GM13976 (cell line): ENCODE measurements at regions of chr11 and their contacts with region 1.

Region 1: DNA sequence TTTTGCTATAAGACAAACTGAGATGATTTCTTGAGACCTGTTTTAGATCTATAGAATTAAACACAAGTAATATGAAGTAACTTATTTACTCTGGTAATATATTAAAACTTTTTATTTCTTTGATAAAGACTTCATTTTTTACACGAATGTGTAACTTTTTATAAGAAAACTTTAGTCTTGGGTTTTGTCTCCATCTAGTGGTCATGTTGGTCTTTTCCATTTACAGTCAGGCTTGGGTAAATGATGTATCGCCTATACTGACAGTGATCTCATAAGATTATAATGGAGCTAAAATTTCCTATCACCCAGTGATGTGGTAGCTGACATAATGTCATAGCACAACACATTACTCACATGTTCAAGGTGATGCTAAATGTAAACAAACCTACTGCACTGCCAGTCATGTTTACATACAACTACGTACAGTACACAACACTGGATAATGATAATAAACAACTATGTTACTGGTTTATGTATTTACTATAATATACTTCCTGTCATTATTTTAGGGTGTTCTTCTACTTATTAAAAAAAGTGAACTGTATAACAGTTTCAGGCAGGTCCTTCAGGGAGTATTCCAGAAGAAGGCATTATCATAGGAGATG is 7.5 kb upstream of the C11orf97 start:
- DNase-seq: peak; percentile 50
- CTCF ChIP-seq: peak; percentile 35

Region 2: DNA sequence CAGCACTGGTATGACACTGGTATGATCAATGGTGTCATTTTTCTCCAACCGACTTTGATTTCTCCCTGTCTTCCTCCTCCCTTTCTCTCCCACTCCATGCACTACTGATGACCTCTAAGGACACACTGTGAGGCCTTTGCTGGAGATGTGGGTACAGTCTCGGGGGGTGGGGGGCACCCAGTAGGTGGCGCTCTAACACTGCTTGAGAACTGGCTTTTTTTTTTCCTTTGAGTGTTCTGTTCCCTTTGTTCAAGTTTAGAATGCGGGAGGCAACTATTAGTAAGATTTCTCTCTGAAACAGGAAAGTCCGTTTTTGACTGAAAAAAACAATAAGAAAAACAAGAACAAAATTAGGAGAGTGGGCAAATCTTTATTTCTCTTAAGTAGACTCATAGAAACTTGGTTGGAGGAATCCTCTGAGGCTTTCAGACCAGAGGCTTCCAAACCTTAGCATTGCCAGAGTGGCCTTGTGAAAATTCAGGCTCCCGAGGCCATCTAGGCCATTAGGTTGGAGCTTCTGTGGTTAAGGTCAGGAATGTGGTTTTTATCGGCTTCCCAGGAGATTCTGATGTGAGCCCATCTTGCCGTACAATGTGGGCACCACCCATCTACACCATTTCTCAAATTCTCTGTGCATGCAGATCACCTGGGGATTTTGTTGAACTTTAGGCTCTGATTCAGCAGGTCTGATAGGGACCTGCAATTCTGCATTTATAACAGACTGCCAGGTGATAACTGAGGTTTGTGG is 332.9 kb before region 1 on chr11:
- in situ Hi-C with region 1: loop called (anchors 10 kb)
- DNase-seq: peak; percentile 53
- CTCF ChIP-seq: peak; percentile 67

Region 3: GRCh38 chr11:94325681-94326080 is 179.1 kb before region 1 on chr11:
- in situ Hi-C with region 1: loop called (anchors 10 kb)
- DNase-seq: peak; percentile 69
- CTCF ChIP-seq: peak; percentile 74

Region 4: GRCh38 chr11:95067039-95067840 is 562.4 kb after region 1 on chr11:
- in situ Hi-C with region 1: no loop called
- DNase-seq: peak; percentile 65
- CTCF ChIP-seq: peak; percentile 54